ENCODE measurements at regions of chr1 and their contacts with region 1.

Region 1: DNA sequence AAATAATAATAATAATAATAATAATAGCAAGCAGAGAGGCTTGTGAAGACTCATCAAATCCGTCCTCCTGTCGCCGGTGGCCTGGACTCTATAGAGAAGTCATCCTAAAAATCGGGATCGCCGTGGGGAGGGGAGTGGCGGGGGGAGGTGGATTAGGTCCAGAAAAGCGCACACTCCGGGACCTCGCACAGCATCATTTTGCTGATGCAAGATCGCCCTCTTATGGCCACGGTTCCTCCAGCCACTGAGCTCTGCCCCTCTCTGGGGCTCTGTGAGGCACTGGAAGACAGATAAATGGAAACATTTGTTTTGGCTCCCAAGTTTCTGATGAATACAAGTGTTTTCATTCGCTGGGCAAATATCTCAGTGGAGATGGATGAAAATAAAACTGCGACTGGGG is 612.0 kb downstream of the MATN1 start:
- DNase-seq: peak; percentile 65
- H3K4me3 Mint-ChIP-seq: no peak overlapping the region
- H3K27ac Mint-ChIP-seq: no peak overlapping the region
- H3K4me1 Mint-ChIP-seq: no peaks in the 10 kb centered on the region
- H3K27me3 Mint-ChIP-seq: peaks cover 80% of the 10 kb centered on the region
- CTCF ChIP-seq: peak; percentile 60

Region 2: GRCh38 chr1:29502911-29503840 is 608.3 kb before region 1 on chr1:
- CTCF ChIA-PET with region 1: no interaction called
- intact Hi-C with region 1: no loop called
- DNase-seq: no peak
- H3K4me3 Mint-ChIP-seq: no peak overlapping the region
- H3K27ac Mint-ChIP-seq: no peak overlapping the region
- H3K4me1 Mint-ChIP-seq: no peaks in the 10 kb centered on the region
- H3K27me3 Mint-ChIP-seq: peaks cover 94% of the 10 kb centered on the region
- CTCF ChIP-seq: no peak

Region 3: GRCh38 chr1:29711582-29712283 is 399.7 kb before region 1 on chr1:
- CTCF ChIA-PET with region 1: no interaction called
- intact Hi-C with region 1: loop called (anchors 10 kb)
- DNase-seq: no peak
- H3K4me3 Mint-ChIP-seq: no peak overlapping the region
- H3K27ac Mint-ChIP-seq: no peak overlapping the region
- H3K4me1 Mint-ChIP-seq: peaks cover 41% of the 10 kb centered on the region
- H3K27me3 Mint-ChIP-seq: peaks cover 9% of the 10 kb centered on the region
- CTCF ChIP-seq: no peak

Region 4: DNA sequence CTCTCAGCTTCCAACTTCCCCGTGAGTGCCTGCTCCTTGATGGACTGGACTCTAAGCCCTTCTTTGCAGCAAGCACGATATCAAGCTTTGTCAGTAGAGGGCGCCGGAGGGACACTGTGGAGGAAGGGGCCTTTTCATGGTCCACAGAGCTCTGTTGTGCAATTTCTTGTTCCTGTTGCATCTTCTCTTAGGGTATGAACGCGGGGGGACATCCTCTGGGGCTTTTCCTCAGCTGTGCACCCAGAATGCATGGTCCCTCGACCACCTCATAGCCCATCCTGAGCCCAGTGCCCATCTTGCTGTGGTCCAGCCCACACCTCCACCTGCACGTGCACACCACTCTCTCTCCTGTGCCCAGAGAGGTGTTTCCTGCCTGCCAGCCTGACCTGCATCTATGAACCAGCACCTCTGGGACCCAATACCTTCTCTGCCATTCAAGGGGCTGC is 318.3 kb before region 1 on chr1:
- CTCF ChIA-PET with region 1: interaction called, 21 read pairs
- intact Hi-C with region 1: loop called (anchors 2 kb)
- DNase-seq: peak; percentile 89
- H3K4me3 Mint-ChIP-seq: no peak overlapping the region
- H3K27ac Mint-ChIP-seq: peak overlapping the region; percentile 56
- H3K4me1 Mint-ChIP-seq: peaks cover 9% of the 10 kb centered on the region
- H3K27me3 Mint-ChIP-seq: peaks cover 56% of the 10 kb centered on the region
- CTCF ChIP-seq: peak; percentile 85

Region 5: GRCh38 chr1:29912425-29912824 is 199.0 kb before region 1 on chr1:
- CTCF ChIA-PET with region 1: interaction called, 4 read pairs
- intact Hi-C with region 1: loop called (anchors 1 kb)
- DNase-seq: peak; percentile 51
- H3K4me3 Mint-ChIP-seq: no peak overlapping the region
- H3K27ac Mint-ChIP-seq: no peak overlapping the region
- H3K4me1 Mint-ChIP-seq: no peaks in the 10 kb centered on the region
- H3K27me3 Mint-ChIP-seq: peaks cover 60% of the 10 kb centered on the region
- CTCF ChIP-seq: peak; percentile 29

Measured in Calu3 (cell line).